Heart right ventricle (tissue), 16 donors: ENCODE measurements at regions of chr4 and their contacts with region 1.

Region 1: GRCh38 chr4:153344131-153345010 is at the start of gene MND1:
- DNase-seq: peak; percentile 86 to 87
- ATAC-seq: peak; percentile 92 to 97 (median 95)
- H3K4me3 ChIP-seq: peak within 1 kb of the TSS; percentile 66 to 91 (median 81)
- H3K27ac ChIP-seq: peak within 1 kb of the TSS in 1 of 10 donors; percentile 64
- H3K4me1 ChIP-seq: peaks cover 2 to 29% (median 17%) of the 10 kb centered on the region in 9 donors
- H3K27me3 ChIP-seq: no peaks in the 10 kb centered on the region
- CTCF ChIP-seq: peak; percentile 79 to 99 (median 99)
- total RNA-seq, gene MND1: 0.25 to 1.7 (median 0.40) TPM in 5 of 10 donors, not detected in the others

Region 2: GRCh38 chr4:153060196-153060595 is 284.2 kb before region 1 on chr4:
- intact Hi-C with region 1: no loop called
- DNase-seq: no peak
- ATAC-seq: no peak
- H3K4me3 ChIP-seq: no peak overlapping the region
- H3K27ac ChIP-seq: no peak overlapping the region
- H3K4me1 ChIP-seq: no peaks in the 10 kb centered on the region
- H3K27me3 ChIP-seq: peaks cover 5 to 47% (median 26%) of the 10 kb centered on the region in 7 donors
- CTCF ChIP-seq: no peak

Region 3: GRCh38 chr4:153383131-153383530 is 38.8 kb after region 1 on chr4:
- intact Hi-C with region 1: loop called in 1 of 10 experiments (anchors 2 kb)
- DNase-seq: no peak
- ATAC-seq: no peak
- H3K4me3 ChIP-seq: no peak overlapping the region
- H3K27ac ChIP-seq: no peak overlapping the region
- H3K4me1 ChIP-seq: peaks cover 0 to 6% (median 0%) of the 10 kb centered on the region in 9 donors
- H3K27me3 ChIP-seq: no peaks in the 10 kb centered on the region
- CTCF ChIP-seq: no peak

Region 4: DNA sequence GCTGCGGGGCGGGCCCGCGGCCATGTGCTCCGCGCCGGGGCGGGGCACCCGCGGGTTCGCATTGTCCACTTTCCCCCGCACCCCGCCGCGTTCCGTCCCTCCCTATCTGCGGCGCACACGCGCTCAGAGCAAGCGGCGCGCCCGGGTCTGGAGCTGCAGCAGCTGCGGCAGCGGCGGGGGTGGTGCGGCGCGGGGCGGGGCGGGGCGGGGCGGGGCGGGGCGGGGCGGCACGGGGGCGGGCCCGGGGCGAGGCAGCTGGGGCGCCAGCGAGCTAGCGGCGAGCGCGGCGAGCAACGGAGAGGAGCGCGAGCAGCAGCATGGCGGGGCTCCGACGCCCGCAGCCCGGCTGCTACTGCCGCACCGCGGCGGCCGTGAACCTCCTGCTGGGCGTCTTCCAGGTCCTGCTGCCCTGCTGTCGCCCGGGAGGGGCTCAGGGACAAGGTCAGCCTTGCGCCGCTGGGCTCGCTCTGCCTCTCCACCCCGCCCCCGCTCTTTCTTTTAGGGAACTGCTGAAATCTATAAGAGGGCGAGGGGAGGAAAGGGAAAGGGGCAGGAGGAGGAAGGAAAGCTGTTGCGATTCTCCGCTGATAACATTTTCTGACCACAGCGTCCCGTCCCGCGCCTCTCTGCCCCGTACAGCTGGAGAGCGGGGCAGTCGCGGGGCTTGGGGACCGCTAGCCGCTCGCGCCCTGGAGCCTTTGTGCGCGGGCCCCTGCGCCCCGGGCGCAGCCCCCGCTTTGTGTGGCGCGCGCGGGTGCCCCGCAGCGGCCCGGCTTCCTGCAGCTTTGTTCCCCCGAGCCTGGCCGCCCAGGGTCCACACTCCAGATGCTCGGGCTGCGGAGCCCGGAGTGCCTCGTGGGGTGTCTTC is 121.9 kb after region 1 on chr4 and contains the start of gene TMEM131L:
- intact Hi-C with region 1: loop called in 5 of 10 experiments (anchors 10 kb)
- DNase-seq: peak; percentile 60 to 77
- ATAC-seq: peak; percentile 77 to 93 (median 89)
- H3K4me3 ChIP-seq: peak within 1 kb of the TSS; percentile 61 to 98 (median 91)
- H3K27ac ChIP-seq: peak within 1 kb of the TSS; percentile 71 to 93 (median 85)
- H3K4me1 ChIP-seq: peaks cover 3 to 63% (median 48%) of the 10 kb centered on the region in 9 donors
- H3K27me3 ChIP-seq: no peaks in the 10 kb centered on the region
- CTCF ChIP-seq: peak in 5 of 9 donors; percentile 11 to 46 (median 41)
- total RNA-seq, gene TMEM131L: 9.1 to 33.6 (median 20.0) TPM

Region 5: GRCh38 chr4:153579872-153580271 is 235.5 kb after region 1 on chr4:
- intact Hi-C with region 1: loop called (anchors 1 to 5 kb)
- DNase-seq: no peak
- ATAC-seq: no peak
- H3K4me3 ChIP-seq: no peak overlapping the region
- H3K27ac ChIP-seq: no peak overlapping the region
- H3K4me1 ChIP-seq: peaks cover 0 to 16% (median 0%) of the 10 kb centered on the region in 9 donors
- H3K27me3 ChIP-seq: no peaks in the 10 kb centered on the region
- CTCF ChIP-seq: no peak

Region 6: GRCh38 chr4:153649572-153649991 is 305.2 kb after region 1 on chr4:
- intact Hi-C with region 1: loop called in 4 of 10 experiments (anchors 5 to 10 kb)
- DNase-seq: no peak
- ATAC-seq: no peak
- H3K4me3 ChIP-seq: no peak overlapping the region
- H3K27ac ChIP-seq: peak overlapping the region in 1 of 10 donors; percentile 94
- H3K4me1 ChIP-seq: peaks cover 0 to 65% (median 4%) of the 10 kb centered on the region in 9 donors
- H3K27me3 ChIP-seq: no peaks in the 10 kb centered on the region
- CTCF ChIP-seq: peak in 5 of 9 donors; percentile 34 to 50 (median 40)